ENCODE measurements at regions of chr19 and their contacts with region 1.

Region 1: GRCh38 chr19:18521885-18522624 is at the start of gene ELL:
- DNase-seq: peak; percentile 100
- ATAC-seq: peak; percentile 87
- H3K4me3 ChIP-seq: peak within 1 kb of the TSS; percentile 74 to 97 (median 89)
- H3K4me3 Mint-ChIP-seq: peak within 1 kb of the TSS; percentile 90
- H3K27ac ChIP-seq: peak within 1 kb of the TSS; percentile 95 to 98
- H3K27ac Mint-ChIP-seq: peak within 1 kb of the TSS; percentile 95
- H3K4me1 ChIP-seq: peaks cover 7 to 23% of the 10 kb centered on the region in 2 donors
- H3K4me1 Mint-ChIP-seq: peaks cover 18% of the 10 kb centered on the region
- H3K27me3 ChIP-seq: no peaks in the 10 kb centered on the region
- H3K27me3 Mint-ChIP-seq: no peaks in the 10 kb centered on the region
- CTCF ChIP-seq: no peak
- total RNA-seq, gene ELL: 31.4 and 34.0 TPM in 2 replicates

Region 2: GRCh38 chr19:18192673-18193387 is 329.2 kb before region 1 on chr19 and contains the start of gene MPV17L2:
- CTCF ChIA-PET with region 1: no interaction called
- POLR2A ChIA-PET with region 1: interaction called, 3 read pairs
- intact Hi-C with region 1: loop called (anchors 5 kb)
- DNase-seq: peak; percentile 100
- ATAC-seq: peak; percentile 83
- H3K4me3 ChIP-seq: peak within 1 kb of the TSS; percentile 76 to 92 (median 82)
- H3K4me3 Mint-ChIP-seq: peak within 1 kb of the TSS; percentile 93
- H3K27ac ChIP-seq: peak within 1 kb of the TSS; percentile 86 to 93
- H3K27ac Mint-ChIP-seq: peak within 1 kb of the TSS; percentile 97
- H3K4me1 ChIP-seq: peaks cover 25 to 40% of the 10 kb centered on the region in 2 donors
- H3K4me1 Mint-ChIP-seq: peaks cover 38% of the 10 kb centered on the region
- H3K27me3 ChIP-seq: no peaks in the 10 kb centered on the region
- H3K27me3 Mint-ChIP-seq: no peaks in the 10 kb centered on the region
- CTCF ChIP-seq: no peak
- total RNA-seq, gene MPV17L2: 6.5 and 8.6 TPM in 2 replicates

Region 3: GRCh38 chr19:18557474-18558201 is 35.6 kb after region 1 on chr19 and contains the start of gene KXD1:
- CTCF ChIA-PET with region 1: interaction called, 13 read pairs
- POLR2A ChIA-PET with region 1: interaction called, 44 read pairs
- intact Hi-C with region 1: loop called (anchors 1 kb)
- DNase-seq: peak; percentile 99
- ATAC-seq: peak; percentile 99
- H3K4me3 ChIP-seq: peak within 1 kb of the TSS; percentile 73 to 98 (median 93)
- H3K4me3 Mint-ChIP-seq: peak within 1 kb of the TSS; percentile 90
- H3K27ac ChIP-seq: peak within 1 kb of the TSS; percentile 82 to 97
- H3K27ac Mint-ChIP-seq: peak within 1 kb of the TSS; percentile 90
- H3K4me1 ChIP-seq: peaks cover 15 to 25% of the 10 kb centered on the region in 2 donors
- H3K4me1 Mint-ChIP-seq: peaks cover 21% of the 10 kb centered on the region
- H3K27me3 ChIP-seq: no peaks in the 10 kb centered on the region
- H3K27me3 Mint-ChIP-seq: no peaks in the 10 kb centered on the region
- CTCF ChIP-seq: no peak
- total RNA-seq, gene KXD1: 88.5 and 90.0 TPM in 2 replicates

Region 4: DNA sequence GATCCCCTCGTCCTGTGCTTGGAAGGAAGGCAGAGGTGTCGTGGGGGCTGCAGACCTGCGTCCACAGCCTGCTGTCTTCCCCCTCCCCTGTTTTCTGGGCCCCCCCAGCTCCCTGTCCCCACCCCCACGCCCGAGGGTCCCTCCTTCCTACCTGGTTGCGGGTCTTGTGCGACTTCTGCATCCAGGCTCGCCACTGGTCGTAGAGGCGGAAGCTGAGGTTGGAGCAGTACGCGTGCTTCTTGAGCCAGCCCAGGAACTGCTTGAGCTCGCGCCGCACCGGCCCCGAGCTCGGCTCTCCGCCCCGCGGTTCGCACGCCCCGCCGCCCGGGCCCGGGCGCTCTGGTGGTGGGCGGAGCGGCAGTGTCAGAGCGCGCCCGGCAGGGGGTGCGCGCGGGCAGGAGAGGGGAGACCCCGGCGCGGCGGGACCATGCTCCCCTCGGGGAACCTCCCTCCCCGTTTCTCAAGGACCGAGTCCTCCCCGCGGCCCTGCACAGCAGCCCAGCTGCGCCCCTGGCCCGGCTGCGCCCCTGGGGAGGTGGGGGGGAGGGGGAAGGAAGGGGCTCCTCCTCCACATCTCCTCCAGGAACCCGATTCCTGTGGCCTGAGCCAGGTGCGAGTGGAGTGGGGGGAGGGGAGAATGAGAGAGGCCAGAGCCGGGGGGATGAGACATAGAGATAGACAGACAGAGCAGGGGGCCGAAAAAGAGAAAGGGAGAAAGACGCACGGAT is 72.2 kb after region 1 on chr19:
- CTCF ChIA-PET with region 1: interaction called, 32 read pairs
- POLR2A ChIA-PET with region 1: interaction called, 19 read pairs
- intact Hi-C with region 1: loop called (anchors 1 kb)
- DNase-seq: peak; percentile 86
- ATAC-seq: peak; percentile 86
- H3K4me3 ChIP-seq: peak overlapping the region in 4 of 5 experiments; percentile 42 to 69 (median 48)
- H3K4me3 Mint-ChIP-seq: peak overlapping the region; percentile 79
- H3K27ac ChIP-seq: no peak overlapping the region
- H3K27ac Mint-ChIP-seq: peak overlapping the region; percentile 59
- H3K4me1 ChIP-seq: peaks cover 21 to 39% of the 10 kb centered on the region in 2 donors
- H3K4me1 Mint-ChIP-seq: peaks cover 25% of the 10 kb centered on the region
- H3K27me3 ChIP-seq: peaks cover 0 to 29% (median 8%) of the 10 kb centered on the region in 4 experiments
- H3K27me3 Mint-ChIP-seq: peaks cover 7% of the 10 kb centered on the region
- CTCF ChIP-seq: peak; percentile 84

Region 5: DNA sequence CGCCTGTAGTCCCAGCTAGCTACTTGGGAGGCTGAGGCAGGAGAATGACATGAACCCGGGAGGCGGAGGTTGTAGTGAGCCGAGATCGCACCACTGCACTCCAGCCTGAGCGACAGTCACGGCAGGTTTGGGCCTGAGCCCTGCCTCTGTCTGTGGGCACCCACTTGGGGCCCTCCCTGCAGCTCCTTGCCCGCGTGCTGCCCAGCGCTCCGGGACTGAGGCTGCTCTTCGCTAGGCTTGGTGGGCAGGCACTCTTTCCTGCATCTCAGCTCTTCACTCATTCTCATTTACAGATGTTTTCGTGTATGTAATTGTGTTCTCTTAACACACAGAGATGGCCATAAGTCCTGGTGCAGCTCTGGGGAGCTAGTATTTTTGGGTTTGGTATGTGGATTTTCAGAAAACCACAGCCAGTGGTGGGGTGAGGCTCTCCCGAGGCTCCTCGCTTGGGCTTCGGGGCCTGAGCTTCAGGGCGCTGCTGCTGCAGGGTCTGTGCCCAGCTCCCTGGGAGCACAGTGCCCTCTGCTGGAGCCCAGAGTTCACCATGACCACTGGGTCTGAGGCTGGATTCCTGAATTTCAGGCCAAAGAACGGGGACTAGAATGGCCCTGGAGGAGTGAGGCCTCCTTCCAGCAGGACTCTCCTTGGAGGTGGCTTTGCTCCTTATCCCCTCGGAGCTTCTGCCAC is 324.9 kb after region 1 on chr19:
- CTCF ChIA-PET with region 1: interaction called, 47 read pairs
- POLR2A ChIA-PET with region 1: interaction called, 6 read pairs
- intact Hi-C with region 1: loop called (anchors 5 kb)
- DNase-seq: peak; percentile 78
- ATAC-seq: peak; percentile 76
- H3K4me3 ChIP-seq: no peak overlapping the region
- H3K4me3 Mint-ChIP-seq: peak overlapping the region; percentile 21
- H3K27ac ChIP-seq: no peak overlapping the region
- H3K27ac Mint-ChIP-seq: peak overlapping the region; percentile 64
- H3K4me1 ChIP-seq: peaks cover 32 to 52% of the 10 kb centered on the region in 2 donors
- H3K4me1 Mint-ChIP-seq: peaks cover 69% of the 10 kb centered on the region
- H3K27me3 ChIP-seq: no peaks in the 10 kb centered on the region
- H3K27me3 Mint-ChIP-seq: no peaks in the 10 kb centered on the region
- CTCF ChIP-seq: peak; percentile 84

Measured in B cell (primary cell).